Activated CD4-positive, alpha-beta T cell treated with anti-CD3 and anti-CD28 coated beads, Interleukin-2, amount 10 ng/mL, durations not matched to agents 24 days and 14 days (primary cell): ENCODE measurements at regions of chr2 and their contacts with region 1.

Region 1: DNA sequence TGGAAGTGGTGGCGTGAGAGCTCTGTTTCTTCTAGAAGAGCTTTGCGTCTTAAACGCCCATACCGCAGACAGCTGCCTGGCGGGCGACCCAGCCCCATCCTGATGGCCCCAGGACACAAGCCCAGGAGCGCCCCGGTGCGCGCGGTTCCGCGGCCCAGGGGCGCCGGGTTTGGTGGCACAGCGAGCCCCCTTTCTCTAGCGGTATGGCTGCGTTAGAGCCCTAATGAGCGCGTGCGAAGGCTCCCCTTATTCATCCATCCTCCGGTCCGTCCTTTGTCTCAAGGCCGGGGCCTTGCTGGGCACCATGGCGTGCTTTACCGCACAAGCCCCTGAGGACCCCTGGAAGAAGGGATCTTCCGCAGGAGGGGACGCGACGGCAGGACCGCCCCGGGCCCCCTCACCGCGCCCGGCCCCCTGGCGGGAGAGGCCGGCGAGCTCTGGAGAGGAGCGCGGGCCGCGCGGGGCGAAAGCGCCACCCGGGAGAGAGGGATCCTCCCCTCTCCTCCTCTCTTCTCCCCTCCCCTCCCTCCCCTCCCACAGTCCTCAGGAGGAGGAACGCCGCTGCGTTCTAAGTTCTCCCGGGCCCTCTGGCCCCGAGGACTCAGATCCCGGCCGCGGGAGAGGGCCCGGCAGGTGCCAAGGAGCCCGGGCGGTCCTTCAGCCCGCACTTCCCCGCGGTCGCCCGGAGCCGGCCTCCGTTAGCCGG is 626 bp upstream of the SLC1A4 start:
- DNase-seq: peak; percentile 93
- H3K4me3 Mint-ChIP-seq: peak overlapping the region; percentile 77
- H3K27ac Mint-ChIP-seq: peak overlapping the region; percentile 74
- H3K4me1 Mint-ChIP-seq: peaks cover 54% of the 10 kb centered on the region
- H3K27me3 Mint-ChIP-seq: peaks cover 16% of the 10 kb centered on the region

Region 2: GRCh38 chr2:64133828-64134227 is 854.7 kb before region 1 on chr2:
- intact Hi-C with region 1: loop called (anchors 10 kb)
- DNase-seq: no peak
- H3K4me3 Mint-ChIP-seq: peak overlapping the region; percentile 60
- H3K27ac Mint-ChIP-seq: peak overlapping the region; percentile 89
- H3K4me1 Mint-ChIP-seq: peaks cover 72% of the 10 kb centered on the region
- H3K27me3 Mint-ChIP-seq: no peaks in the 10 kb centered on the region

Region 3: DNA sequence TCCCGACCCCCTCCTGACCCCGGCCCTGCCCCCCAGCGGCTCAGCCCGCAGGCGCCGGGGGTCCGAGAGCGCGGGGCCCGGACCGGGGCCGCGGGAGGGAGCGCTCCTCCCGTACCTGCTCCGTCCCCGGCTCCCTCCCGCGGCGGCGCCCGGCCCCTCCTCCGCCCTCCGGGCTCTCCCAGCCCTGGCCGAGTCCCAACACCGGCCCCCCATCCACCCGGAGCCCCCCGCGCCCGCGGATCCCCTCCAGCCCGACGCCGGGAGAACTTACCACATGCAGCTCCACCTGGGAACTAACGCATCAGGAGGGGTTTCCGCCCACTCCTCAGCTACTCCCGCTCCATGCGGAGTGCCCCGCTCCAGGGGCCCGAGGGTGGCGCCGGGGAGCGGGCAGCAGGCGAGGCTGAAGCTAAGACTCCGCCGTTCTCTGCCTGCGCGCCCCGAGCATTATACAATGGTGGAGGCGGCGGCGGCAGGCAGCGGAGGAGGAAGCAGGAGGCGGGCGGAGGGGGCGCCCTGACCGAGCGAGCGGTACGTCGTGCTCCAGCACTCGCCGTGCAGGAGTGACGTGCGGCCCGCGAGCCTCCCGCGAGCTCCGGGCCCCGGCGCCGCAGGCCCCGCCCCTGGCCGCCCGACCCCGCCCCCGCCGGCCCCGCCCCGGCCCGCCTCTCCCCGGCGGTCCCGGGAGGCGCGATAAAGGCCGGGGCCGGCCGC is 335.1 kb before region 1 on chr2 and contains the start of gene SERTAD2:
- intact Hi-C with region 1: loop called (anchors 5 kb)
- DNase-seq: peak; percentile 96
- H3K4me3 Mint-ChIP-seq: peak within 1 kb of the TSS; percentile 95
- H3K27ac Mint-ChIP-seq: peak within 1 kb of the TSS; percentile 92
- H3K4me1 Mint-ChIP-seq: peaks cover 65% of the 10 kb centered on the region
- H3K27me3 Mint-ChIP-seq: no peaks in the 10 kb centered on the region
- total RNA-seq, gene SERTAD2: 24.6 and 26.7 TPM in 2 replicates

Region 4: GRCh38 chr2:64945973-64946768 is 42.4 kb before region 1 on chr2:
- intact Hi-C with region 1: loop called (anchors 2 kb)
- DNase-seq: peak; percentile 92
- H3K4me3 Mint-ChIP-seq: peak overlapping the region; percentile 82
- H3K27ac Mint-ChIP-seq: peak overlapping the region; percentile 97
- H3K4me1 Mint-ChIP-seq: peaks cover 59% of the 10 kb centered on the region
- H3K27me3 Mint-ChIP-seq: no peaks in the 10 kb centered on the region

Region 5: DNA sequence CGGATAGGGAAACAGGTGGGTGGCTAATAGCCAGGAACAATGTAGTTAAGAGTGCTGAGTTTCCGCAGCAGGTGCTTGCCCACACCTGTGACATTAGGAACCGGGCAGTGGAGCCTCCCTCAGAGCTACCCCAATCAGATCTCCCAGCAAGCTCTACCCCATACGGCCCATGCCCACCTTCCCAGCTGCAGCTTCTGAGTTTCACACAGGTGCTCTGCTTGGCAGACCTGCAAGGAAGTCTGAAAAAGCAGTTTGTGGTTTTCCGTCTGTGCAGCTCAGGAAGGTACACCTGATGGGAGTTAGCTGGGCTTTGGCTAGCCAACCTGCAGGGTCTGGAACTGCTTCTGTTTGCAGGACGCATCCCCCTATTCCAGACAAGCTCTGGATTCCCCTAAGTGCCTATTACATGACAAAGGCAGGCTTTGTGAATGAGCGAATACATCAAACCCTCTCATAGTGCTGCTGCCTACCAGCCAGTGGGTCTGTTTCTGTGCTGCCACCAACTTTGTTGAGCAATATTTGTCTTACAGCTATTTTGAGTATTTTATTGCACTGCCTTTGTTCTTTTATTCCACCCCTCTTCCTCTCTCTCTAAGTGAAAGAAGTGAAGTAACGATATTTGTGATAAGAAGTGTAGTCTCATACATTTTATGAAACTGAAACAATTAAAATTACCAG is 42.9 kb after region 1 on chr2:
- intact Hi-C with region 1: no loop called
- DNase-seq: no peak
- H3K4me3 Mint-ChIP-seq: peak overlapping the region; percentile 2
- H3K27ac Mint-ChIP-seq: peak overlapping the region; percentile 50
- H3K4me1 Mint-ChIP-seq: peaks cover 19% of the 10 kb centered on the region
- H3K27me3 Mint-ChIP-seq: no peaks in the 10 kb centered on the region

Region 6: GRCh38 chr2:65129826-65130663 is 141.5 kb after region 1 on chr2 and contains the start of gene RAB1A:
- intact Hi-C with region 1: loop called (anchors 1 kb)
- DNase-seq: peak; percentile 99
- H3K4me3 Mint-ChIP-seq: peak within 1 kb of the TSS; percentile 95
- H3K27ac Mint-ChIP-seq: peak within 1 kb of the TSS; percentile 98
- H3K4me1 Mint-ChIP-seq: peaks cover 24% of the 10 kb centered on the region
- H3K27me3 Mint-ChIP-seq: peaks cover 3% of the 10 kb centered on the region
- total RNA-seq, gene RAB1A: 79.9 and 81.1 TPM in 2 replicates